Natural killer cell (primary cell): ENCODE measurements at regions of chr2 and their contacts with region 1.

Region 1: GRCh38 chr2:158024288-158024898 is 77.3 kb upstream of the UPP2 start:
- DNase-seq: peak in 1 of 2 donors; percentile 69
- ATAC-seq: peak in 2 of 3 donors; percentile 48 to 62
- H3K4me3 ChIP-seq: no peak overlapping the region
- H3K4me3 Mint-ChIP-seq: no peak overlapping the region
- H3K27ac ChIP-seq: no peak overlapping the region
- H3K27ac Mint-ChIP-seq: no peak overlapping the region
- H3K4me1 ChIP-seq: no peaks in the 10 kb centered on the region
- H3K4me1 Mint-ChIP-seq: no peaks in the 10 kb centered on the region
- H3K27me3 ChIP-seq: no peaks in the 10 kb centered on the region
- H3K27me3 Mint-ChIP-seq: no peaks in the 10 kb centered on the region
- CTCF ChIP-seq: peak; percentile 77

Region 2: GRCh38 chr2:157784169-157784822 is 240.1 kb before region 1 on chr2:
- intact Hi-C with region 1: no loop called
- DNase-seq: peak in 1 of 2 donors; percentile 19
- ATAC-seq: no peak
- H3K4me3 ChIP-seq: no peak overlapping the region
- H3K4me3 Mint-ChIP-seq: no peak overlapping the region
- H3K27ac ChIP-seq: no peak overlapping the region
- H3K27ac Mint-ChIP-seq: no peak overlapping the region
- H3K4me1 ChIP-seq: no peaks in the 10 kb centered on the region
- H3K4me1 Mint-ChIP-seq: peaks cover 7 to 8% of the 10 kb centered on the region in 2 donors
- H3K27me3 ChIP-seq: no peaks in the 10 kb centered on the region
- H3K27me3 Mint-ChIP-seq: no peaks in the 10 kb centered on the region
- CTCF ChIP-seq: no peak

Region 3: DNA sequence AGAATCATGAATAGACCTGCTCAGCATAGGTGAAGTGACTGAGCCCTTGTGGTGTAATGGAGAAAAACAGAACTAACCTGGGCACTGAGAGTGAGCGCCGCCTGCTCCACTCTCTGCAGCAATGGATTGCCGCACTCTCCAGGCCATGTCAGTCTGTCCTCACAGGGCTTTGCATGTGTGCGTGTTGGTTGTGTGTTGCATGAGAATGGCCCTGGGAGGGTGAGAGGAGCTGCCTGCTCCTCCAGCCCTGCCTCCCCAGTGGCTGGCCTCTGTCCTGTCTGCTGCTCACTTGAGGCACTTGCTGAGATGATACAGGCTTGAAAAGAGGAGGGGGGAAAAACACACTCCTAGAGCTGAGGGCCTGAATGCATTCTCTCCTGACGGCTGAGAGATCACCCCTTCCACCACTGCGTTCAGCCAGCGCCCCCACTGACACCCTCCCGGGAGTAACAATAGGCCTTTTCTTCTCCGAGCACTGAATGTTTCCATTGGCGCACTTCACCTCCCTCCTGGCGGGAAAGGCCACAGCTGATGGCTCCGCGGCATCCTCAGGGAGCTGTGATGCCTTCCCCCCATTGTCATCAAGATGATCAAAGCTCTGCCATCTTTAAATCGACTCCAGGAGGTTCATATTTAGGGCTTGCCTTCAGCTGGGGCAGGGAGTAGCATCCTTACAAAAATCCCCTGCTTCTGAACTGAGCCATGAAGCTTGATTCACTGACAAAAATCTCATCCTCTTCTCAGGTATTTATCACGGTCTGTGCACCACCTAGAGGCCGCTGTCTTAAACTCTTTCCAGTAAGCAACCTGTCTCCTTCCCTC is 720.9 kb after region 1 on chr2:
- intact Hi-C with region 1: loop called (anchors 2 kb)
- DNase-seq: peak in 1 of 2 donors; percentile 59
- ATAC-seq: no peak
- H3K4me3 ChIP-seq: no peak overlapping the region
- H3K4me3 Mint-ChIP-seq: no peak overlapping the region
- H3K27ac ChIP-seq: no peak overlapping the region
- H3K27ac Mint-ChIP-seq: no peak overlapping the region
- H3K4me1 ChIP-seq: no peaks in the 10 kb centered on the region
- H3K4me1 Mint-ChIP-seq: peaks cover 0 to 5% of the 10 kb centered on the region in 2 donors
- H3K27me3 ChIP-seq: no peaks in the 10 kb centered on the region
- H3K27me3 Mint-ChIP-seq: peaks cover 15 to 43% of the 10 kb centered on the region in 2 donors
- CTCF ChIP-seq: peak; percentile 5

Region 4: GRCh38 chr2:158753641-158754611 is 729.5 kb after region 1 on chr2:
- intact Hi-C with region 1: loop called (anchors 1 kb)
- DNase-seq: peak in 1 of 2 donors; percentile 67
- ATAC-seq: peak; percentile 64 to 84 (median 76)
- H3K4me3 ChIP-seq: no peak overlapping the region
- H3K4me3 Mint-ChIP-seq: no peak overlapping the region
- H3K27ac ChIP-seq: no peak overlapping the region
- H3K27ac Mint-ChIP-seq: no peak overlapping the region
- H3K4me1 ChIP-seq: no peaks in the 10 kb centered on the region
- H3K4me1 Mint-ChIP-seq: no peaks in the 10 kb centered on the region
- H3K27me3 ChIP-seq: no peaks in the 10 kb centered on the region
- H3K27me3 Mint-ChIP-seq: peaks cover 8 to 16% of the 10 kb centered on the region in 2 donors
- CTCF ChIP-seq: peak; percentile 92